ENCODE measurements at regions of chrX and their contacts with region 1.

Region 1: DNA sequence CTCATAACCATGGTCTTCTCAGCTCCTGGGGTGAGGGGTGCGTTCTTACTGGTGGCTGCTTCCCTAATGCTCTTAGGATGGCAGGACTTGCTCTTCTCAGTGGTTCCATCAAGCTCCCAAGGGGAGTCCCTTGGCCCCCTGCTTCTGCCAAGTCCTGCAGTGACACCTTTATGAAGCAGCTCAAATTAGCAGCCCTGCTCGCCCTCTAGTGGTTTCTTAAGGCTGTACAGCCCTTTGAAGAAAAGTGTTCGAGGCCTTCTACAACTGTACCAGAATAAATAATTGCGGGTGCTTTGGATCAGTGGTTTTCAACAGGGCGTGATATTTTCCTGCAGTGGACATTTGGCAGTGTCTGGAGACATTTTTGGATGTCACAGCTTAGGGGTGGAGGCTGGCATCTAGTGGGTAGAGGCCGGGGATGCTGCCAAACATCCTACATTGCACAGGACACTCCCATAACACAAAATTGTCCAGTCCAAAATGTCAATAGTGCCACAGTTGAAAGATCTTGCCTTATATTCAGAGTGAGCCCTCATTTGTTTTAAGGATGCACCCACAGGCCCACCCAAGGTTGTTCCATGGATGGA is 204.7 kb upstream of the S100G start:
- DNase-seq: peak in 8 of 9 experiments; percentile 1 to 65 (median 39)
- ATAC-seq: no peak
- H3K4me3 ChIP-seq: no peak overlapping the region
- H3K4me3 Mint-ChIP-seq: no peak overlapping the region
- H3K27ac ChIP-seq: no peak overlapping the region
- H3K27ac Mint-ChIP-seq: no peak overlapping the region
- H3K4me1 ChIP-seq: peaks cover 12% of the 10 kb centered on the region
- H3K4me1 Mint-ChIP-seq: peaks cover 10% of the 10 kb centered on the region
- H3K27me3 ChIP-seq: no peaks in the 10 kb centered on the region
- H3K27me3 Mint-ChIP-seq: no peaks in the 10 kb centered on the region
- CTCF ChIP-seq: peak; percentile 56

Region 2: DNA sequence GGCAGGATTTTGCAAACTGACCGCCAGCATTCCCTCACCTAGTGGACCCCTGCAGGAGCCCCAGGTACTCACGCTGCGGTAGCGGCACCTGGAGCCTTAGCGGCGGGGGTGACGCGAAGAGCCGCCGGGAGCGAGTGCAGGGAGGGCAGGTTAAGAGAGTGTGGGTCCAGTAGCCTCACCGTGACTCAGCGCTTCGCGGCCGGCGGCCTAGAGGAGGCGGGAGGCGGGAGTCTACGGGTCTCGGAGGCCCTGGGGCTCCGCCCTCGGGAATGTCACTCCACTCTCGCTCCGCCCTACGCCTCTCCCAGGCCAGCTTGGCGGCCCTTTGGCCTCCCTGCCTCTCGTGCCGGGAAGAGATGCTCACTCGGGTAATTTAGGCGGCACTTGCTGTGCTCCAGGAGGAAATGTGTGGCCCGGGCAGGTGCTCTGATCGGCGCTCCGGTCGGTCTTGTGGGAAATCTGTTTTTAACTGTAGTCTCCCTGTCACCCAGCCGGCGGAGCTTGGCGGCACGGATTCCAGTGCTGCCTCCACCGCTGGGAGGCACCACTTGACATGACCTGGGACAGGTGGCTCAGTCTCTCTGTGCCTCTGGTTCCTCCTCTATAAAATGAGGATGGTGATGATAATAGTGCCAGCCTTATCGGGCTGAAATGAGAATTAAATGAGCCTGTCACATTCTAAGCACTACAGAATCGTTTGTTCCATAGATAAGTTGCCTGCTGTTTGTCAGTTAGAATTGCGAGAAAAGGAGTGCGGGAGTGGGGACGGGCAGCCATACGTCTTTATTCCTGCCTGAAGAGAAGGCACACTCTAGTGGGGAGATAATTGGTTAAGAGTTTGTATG is 951.9 kb before region 1 on chrX and contains the start of gene PIR:
- CTCF ChIA-PET with region 1: no interaction called
- POLR2A ChIA-PET with region 1: no interaction called
- intact Hi-C with region 1: loop called in 1 of 2 experiments (anchors 5 kb)
- DNase-seq: peak in 8 of 9 experiments; percentile 13 to 61 (median 34)
- ATAC-seq: peak; percentile 62
- H3K4me3 ChIP-seq: peak within 1 kb of the TSS; percentile 27 to 45
- H3K4me3 Mint-ChIP-seq: peak within 1 kb of the TSS; percentile 83
- H3K27ac ChIP-seq: no peak within 1 kb of the TSS
- H3K27ac Mint-ChIP-seq: no peak within 1 kb of the TSS
- H3K4me1 ChIP-seq: no peaks in the 10 kb centered on the region
- H3K4me1 Mint-ChIP-seq: peaks cover 7% of the 10 kb centered on the region
- H3K27me3 ChIP-seq: no peaks in the 10 kb centered on the region
- H3K27me3 Mint-ChIP-seq: peaks cover 4% of the 10 kb centered on the region
- CTCF ChIP-seq: no peak
- total RNA-seq, gene PIR: not detected

Region 3: DNA sequence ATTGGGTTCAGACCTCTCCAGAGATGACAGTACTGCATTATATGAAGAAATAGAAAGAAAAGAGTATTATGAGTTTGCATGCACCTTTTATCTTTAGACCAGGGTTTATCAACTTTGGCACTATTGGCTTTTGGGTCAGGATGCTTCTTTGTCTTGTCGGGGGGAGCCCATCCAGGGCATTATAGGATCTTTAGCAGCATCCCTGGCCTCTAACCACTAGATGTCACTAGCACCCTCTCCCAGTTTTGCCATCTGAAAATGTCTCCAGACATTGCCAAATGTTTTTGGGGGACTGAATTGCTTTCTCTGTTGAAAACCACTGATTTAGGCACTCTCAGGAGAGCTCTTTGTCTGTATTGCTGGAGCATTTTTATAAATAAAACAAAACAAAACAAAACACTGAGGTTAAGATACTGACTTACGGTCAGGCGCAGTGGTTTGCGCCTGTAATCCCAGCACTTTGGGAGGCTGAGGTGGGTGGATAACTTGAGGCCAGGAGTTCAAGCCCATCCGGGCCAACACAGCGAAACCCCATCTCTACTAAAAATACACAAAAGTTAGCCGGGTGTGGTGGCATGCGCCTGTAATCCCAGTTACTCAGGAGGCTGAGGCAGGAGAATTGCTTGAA is 683.6 kb before region 1 on chrX:
- CTCF ChIA-PET with region 1: no interaction called
- POLR2A ChIA-PET with region 1: no interaction called
- intact Hi-C with region 1: loop called in 1 of 2 experiments (anchors 10 kb)
- DNase-seq: peak in 5 of 9 experiments; percentile 22 to 66 (median 50)
- ATAC-seq: peak; percentile 54
- H3K4me3 ChIP-seq: no peak overlapping the region
- H3K4me3 Mint-ChIP-seq: no peak overlapping the region
- H3K27ac ChIP-seq: no peak overlapping the region
- H3K27ac Mint-ChIP-seq: peak overlapping the region; percentile 52
- H3K4me1 ChIP-seq: peaks cover 15% of the 10 kb centered on the region
- H3K4me1 Mint-ChIP-seq: peaks cover 37% of the 10 kb centered on the region
- H3K27me3 ChIP-seq: no peaks in the 10 kb centered on the region
- H3K27me3 Mint-ChIP-seq: no peaks in the 10 kb centered on the region
- CTCF ChIP-seq: peak; percentile 32

Region 4: GRCh38 chrX:16416587-16416986 is 28.7 kb before region 1 on chrX:
- CTCF ChIA-PET with region 1: no interaction called
- POLR2A ChIA-PET with region 1: no interaction called
- intact Hi-C with region 1: loop called in 1 of 2 experiments (anchors 1 kb)
- DNase-seq: no peak
- ATAC-seq: no peak
- H3K4me3 ChIP-seq: no peak overlapping the region
- H3K4me3 Mint-ChIP-seq: no peak overlapping the region
- H3K27ac ChIP-seq: no peak overlapping the region
- H3K27ac Mint-ChIP-seq: no peak overlapping the region
- H3K4me1 ChIP-seq: no peaks in the 10 kb centered on the region
- H3K4me1 Mint-ChIP-seq: no peaks in the 10 kb centered on the region
- H3K27me3 ChIP-seq: no peaks in the 10 kb centered on the region
- H3K27me3 Mint-ChIP-seq: peaks cover 2% of the 10 kb centered on the region
- CTCF ChIP-seq: no peak

Region 5: DNA sequence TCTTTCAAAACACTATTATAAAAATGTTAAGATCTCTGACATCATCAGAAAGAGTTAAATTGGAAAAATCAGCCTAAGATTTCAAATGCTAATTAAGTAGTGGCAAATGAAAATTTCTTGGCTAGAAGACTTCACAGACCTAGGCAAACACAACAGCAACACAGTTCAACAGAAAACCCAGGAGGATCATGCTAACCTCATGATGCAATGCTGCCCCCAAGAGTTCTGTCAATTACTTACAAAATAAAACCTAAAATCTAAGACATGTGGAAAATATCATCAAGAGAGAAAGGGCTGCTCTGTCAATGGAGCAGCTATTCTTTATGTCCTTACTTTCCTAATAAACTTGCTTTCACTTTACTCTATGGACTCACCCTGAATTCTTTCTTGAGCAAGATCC is 225.7 kb after region 1 on chrX:
- CTCF ChIA-PET with region 1: interaction called, 8 read pairs
- POLR2A ChIA-PET with region 1: no interaction called
- intact Hi-C with region 1: loop called in 1 of 2 experiments (anchors 2 kb)
- DNase-seq: peak in 5 of 9 experiments; percentile 8 to 51 (median 30)
- ATAC-seq: no peak
- H3K4me3 ChIP-seq: no peak overlapping the region
- H3K4me3 Mint-ChIP-seq: no peak overlapping the region
- H3K27ac ChIP-seq: no peak overlapping the region
- H3K27ac Mint-ChIP-seq: no peak overlapping the region
- H3K4me1 ChIP-seq: no peaks in the 10 kb centered on the region
- H3K4me1 Mint-ChIP-seq: peaks cover 3% of the 10 kb centered on the region
- H3K27me3 ChIP-seq: no peaks in the 10 kb centered on the region
- H3K27me3 Mint-ChIP-seq: no peaks in the 10 kb centered on the region
- CTCF ChIP-seq: no peak

Measured in CD8-positive, alpha-beta T cell (primary cell).